MCF 10A (cell line): ENCODE measurements at regions of chr3 and their contacts with region 1.

Region 1: GRCh38 chr3:38346587-38347410 is at the start of gene XYLB:
- DNase-seq: peak; percentile 83
- H3K4me3 Mint-ChIP-seq: peak within 1 kb of the TSS; percentile 69
- H3K27ac Mint-ChIP-seq: no peak within 1 kb of the TSS
- H3K4me1 Mint-ChIP-seq: peaks cover 8% of the 10 kb centered on the region
- H3K27me3 Mint-ChIP-seq: no peaks in the 10 kb centered on the region
- CTCF ChIP-seq: peak; percentile 77
- total RNA-seq, gene XYLB: 4.4 and 6.6 TPM in 2 replicates

Region 2: GRCh38 chr3:37935756-37936666 is 410.8 kb before region 1 on chr3:
- CTCF ChIA-PET with region 1: no interaction called
- POLR2A ChIA-PET with region 1: no interaction called
- intact Hi-C with region 1: no loop called
- DNase-seq: peak; percentile 87
- H3K4me3 Mint-ChIP-seq: peak overlapping the region; percentile 33
- H3K27ac Mint-ChIP-seq: peak overlapping the region; percentile 95
- H3K4me1 Mint-ChIP-seq: peaks cover 47% of the 10 kb centered on the region
- H3K27me3 Mint-ChIP-seq: no peaks in the 10 kb centered on the region
- CTCF ChIP-seq: no peak

Region 3: DNA sequence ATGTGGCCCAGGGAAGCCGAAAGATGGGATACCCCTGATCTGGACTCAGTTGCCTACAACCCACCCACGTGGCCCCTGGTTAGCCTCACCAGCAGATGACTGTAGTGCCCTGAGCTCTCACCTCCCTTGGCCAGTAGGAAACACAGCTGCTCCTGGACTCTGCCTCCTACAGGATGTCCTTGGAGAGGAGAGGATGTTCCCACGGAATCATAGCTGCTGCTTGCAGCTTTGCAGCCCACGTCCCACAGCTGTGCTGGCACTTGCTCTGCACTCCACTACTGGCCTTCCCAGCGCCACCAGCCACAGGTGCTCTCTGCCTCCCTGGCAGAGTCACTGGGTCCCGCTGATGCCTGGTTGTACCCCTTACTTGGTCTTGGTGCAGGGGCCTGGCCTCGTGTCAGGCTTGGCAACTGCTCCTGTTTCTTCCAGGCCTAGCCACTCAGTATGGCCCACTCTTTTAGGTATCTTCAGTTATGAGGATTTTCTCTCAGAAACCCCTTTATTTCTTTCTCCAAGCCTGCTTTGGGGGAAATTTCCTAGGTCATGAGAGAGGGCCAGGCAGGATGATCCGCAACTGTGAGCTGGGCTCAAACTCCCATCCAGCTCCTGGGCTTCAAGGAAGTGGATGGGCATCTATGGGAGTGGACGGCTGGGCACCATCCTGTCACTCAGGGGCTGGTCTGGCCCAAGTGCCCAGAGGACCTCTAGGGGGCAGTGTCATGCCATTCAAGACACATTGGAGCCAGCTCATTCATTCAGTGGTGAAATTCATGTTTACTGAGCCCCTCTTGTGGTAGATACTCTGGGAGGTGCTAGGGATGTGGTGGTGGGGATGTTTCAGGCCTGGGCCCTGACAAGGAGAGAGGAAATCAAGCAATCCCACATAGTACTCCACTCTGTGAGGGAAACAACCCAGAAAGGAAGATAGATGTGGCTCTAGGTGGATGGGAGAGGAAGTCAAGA is 372.4 kb before region 1 on chr3:
- CTCF ChIA-PET with region 1: interaction called, 7 read pairs
- POLR2A ChIA-PET with region 1: no interaction called
- intact Hi-C with region 1: loop called (anchors 10 kb)
- DNase-seq: peak; percentile 68
- H3K4me3 Mint-ChIP-seq: no peak overlapping the region
- H3K27ac Mint-ChIP-seq: peak overlapping the region; percentile 12
- H3K4me1 Mint-ChIP-seq: peaks cover 10% of the 10 kb centered on the region
- H3K27me3 Mint-ChIP-seq: no peaks in the 10 kb centered on the region
- CTCF ChIP-seq: peak; percentile 58

Region 4: GRCh38 chr3:38117748-38118420 is 228.9 kb before region 1 on chr3:
- CTCF ChIA-PET with region 1: interaction called, 33 read pairs
- POLR2A ChIA-PET with region 1: no interaction called
- intact Hi-C with region 1: loop called (anchors 5 kb)
- DNase-seq: peak; percentile 65
- H3K4me3 Mint-ChIP-seq: no peak overlapping the region
- H3K27ac Mint-ChIP-seq: no peak overlapping the region
- H3K4me1 Mint-ChIP-seq: no peaks in the 10 kb centered on the region
- H3K27me3 Mint-ChIP-seq: peaks cover 12% of the 10 kb centered on the region
- CTCF ChIP-seq: peak; percentile 70

Region 5: DNA sequence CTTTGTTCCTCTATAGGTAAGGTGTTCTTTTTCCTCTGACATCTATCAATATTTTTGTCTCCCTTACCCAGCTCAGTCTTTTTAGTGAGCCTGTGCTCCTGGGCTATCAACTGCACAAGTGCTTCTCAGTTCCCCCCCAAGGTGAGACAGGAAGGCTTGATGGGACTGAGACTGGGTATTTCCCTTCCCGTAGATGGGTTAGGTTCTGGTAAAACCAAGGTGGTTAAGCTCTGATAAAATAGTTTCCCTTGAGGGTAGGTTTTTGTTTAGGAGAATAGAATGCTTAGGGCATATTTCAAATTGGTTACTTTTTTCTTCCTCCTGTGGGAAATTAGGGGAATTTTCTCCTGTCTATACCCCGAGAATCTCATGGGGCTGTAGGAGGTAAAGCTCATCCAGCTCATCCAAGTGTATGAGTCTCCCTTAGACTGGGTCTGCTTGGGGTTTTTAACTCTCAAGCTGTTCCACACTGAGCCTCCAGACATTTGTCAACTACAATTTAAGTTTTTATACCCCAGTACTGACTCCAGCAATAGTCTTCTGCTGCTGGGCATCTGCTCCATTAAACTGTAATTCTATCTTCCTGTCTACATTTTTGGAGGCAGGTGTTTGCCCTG is 136.6 kb before region 1 on chr3:
- CTCF ChIA-PET with region 1: no interaction called
- POLR2A ChIA-PET with region 1: no interaction called
- intact Hi-C with region 1: no loop called
- DNase-seq: no peak
- H3K4me3 Mint-ChIP-seq: no peak overlapping the region
- H3K27ac Mint-ChIP-seq: no peak overlapping the region
- H3K4me1 Mint-ChIP-seq: peaks cover 10% of the 10 kb centered on the region
- H3K27me3 Mint-ChIP-seq: no peaks in the 10 kb centered on the region
- CTCF ChIP-seq: no peak

Region 6: GRCh38 chr3:38327335-38328009 is 19.3 kb before region 1 on chr3:
- CTCF ChIA-PET with region 1: interaction called, 17 read pairs
- POLR2A ChIA-PET with region 1: no interaction called
- intact Hi-C with region 1: no loop called
- DNase-seq: peak; percentile 39
- H3K4me3 Mint-ChIP-seq: no peak overlapping the region
- H3K27ac Mint-ChIP-seq: peak overlapping the region; percentile 59
- H3K4me1 Mint-ChIP-seq: no peaks in the 10 kb centered on the region
- H3K27me3 Mint-ChIP-seq: no peaks in the 10 kb centered on the region
- CTCF ChIP-seq: no peak

Region 7: GRCh38 chr3:38404286-38404685 is 57.5 kb after region 1 on chr3:
- CTCF ChIA-PET with region 1: interaction called, 17 read pairs
- POLR2A ChIA-PET with region 1: no interaction called
- intact Hi-C with region 1: no loop called
- DNase-seq: peak; percentile 89
- H3K4me3 Mint-ChIP-seq: no peak overlapping the region
- H3K27ac Mint-ChIP-seq: no peak overlapping the region
- H3K4me1 Mint-ChIP-seq: peaks cover 11% of the 10 kb centered on the region
- H3K27me3 Mint-ChIP-seq: no peaks in the 10 kb centered on the region
- CTCF ChIP-seq: no peak

Region 8: DNA sequence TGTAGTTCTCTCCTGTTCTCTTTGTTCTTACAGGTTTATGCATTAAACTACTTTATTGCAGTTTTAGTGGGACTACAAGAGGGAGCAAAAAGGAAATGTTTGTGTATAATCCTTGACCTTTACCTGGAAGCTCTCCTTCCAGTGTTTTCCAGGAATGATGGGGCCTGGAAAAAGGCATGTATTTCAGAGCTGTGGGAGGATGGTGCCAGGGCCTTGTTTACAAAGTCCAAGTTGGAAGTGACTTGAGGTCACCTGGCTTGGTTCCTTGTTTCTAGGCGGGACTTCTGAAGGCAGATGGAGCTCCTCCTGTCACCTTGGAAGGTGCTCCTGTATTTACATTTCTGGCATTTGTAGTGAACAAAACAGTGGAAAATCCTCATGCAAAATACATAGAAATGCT is 122.0 kb after region 1 on chr3:
- CTCF ChIA-PET with region 1: interaction called, 29 read pairs
- POLR2A ChIA-PET with region 1: no interaction called
- intact Hi-C with region 1: no loop called
- DNase-seq: no peak
- H3K4me3 Mint-ChIP-seq: no peak overlapping the region
- H3K27ac Mint-ChIP-seq: no peak overlapping the region
- H3K4me1 Mint-ChIP-seq: no peaks in the 10 kb centered on the region
- H3K27me3 Mint-ChIP-seq: no peaks in the 10 kb centered on the region
- CTCF ChIP-seq: no peak